ENCODE measurements at regions of chr9 and their contacts with region 1.

Region 1: GRCh38 chr9:893843-894420 is 52.4 kb downstream of the DMRT1 start:
- DNase-seq: peak; percentile 80
- H3K4me3 Mint-ChIP-seq: no peak overlapping the region
- H3K27ac Mint-ChIP-seq: no peak overlapping the region
- H3K4me1 Mint-ChIP-seq: peaks cover 10% of the 10 kb centered on the region
- H3K27me3 Mint-ChIP-seq: peaks cover 5% of the 10 kb centered on the region

Region 2: GRCh38 chr9:642014-642413 is 251.9 kb before region 1 on chr9:
- CTCF ChIA-PET with region 1: no interaction called
- POLR2A ChIA-PET with region 1: no interaction called
- intact Hi-C with region 1: no loop called
- DNase-seq: no peak
- H3K4me3 Mint-ChIP-seq: no peak overlapping the region
- H3K27ac Mint-ChIP-seq: no peak overlapping the region
- H3K4me1 Mint-ChIP-seq: peaks cover 26% of the 10 kb centered on the region
- H3K27me3 Mint-ChIP-seq: no peaks in the 10 kb centered on the region

Region 3: GRCh38 chr9:818958-819357 is 75.0 kb before region 1 on chr9:
- CTCF ChIA-PET with region 1: no interaction called
- POLR2A ChIA-PET with region 1: no interaction called
- intact Hi-C with region 1: no loop called
- DNase-seq: no peak
- H3K4me3 Mint-ChIP-seq: no peak overlapping the region
- H3K27ac Mint-ChIP-seq: no peak overlapping the region
- H3K4me1 Mint-ChIP-seq: no peaks in the 10 kb centered on the region
- H3K27me3 Mint-ChIP-seq: peaks cover 3% of the 10 kb centered on the region

Region 4: GRCh38 chr9:846852-847251 is 47.1 kb before region 1 on chr9:
- CTCF ChIA-PET with region 1: no interaction called
- POLR2A ChIA-PET with region 1: no interaction called
- intact Hi-C with region 1: loop called (anchors 5 kb)
- DNase-seq: no peak
- H3K4me3 Mint-ChIP-seq: no peak overlapping the region
- H3K27ac Mint-ChIP-seq: no peak overlapping the region
- H3K4me1 Mint-ChIP-seq: peaks cover 12% of the 10 kb centered on the region
- H3K27me3 Mint-ChIP-seq: peaks cover 41% of the 10 kb centered on the region

Region 5: GRCh38 chr9:1009101-1009707 is 115.3 kb after region 1 on chr9:
- CTCF ChIA-PET with region 1: interaction called, 69 read pairs
- POLR2A ChIA-PET with region 1: no interaction called
- intact Hi-C with region 1: loop called (anchors 1 kb)
- DNase-seq: peak; percentile 86
- H3K4me3 Mint-ChIP-seq: no peak overlapping the region
- H3K27ac Mint-ChIP-seq: no peak overlapping the region
- H3K4me1 Mint-ChIP-seq: peaks cover 3% of the 10 kb centered on the region
- H3K27me3 Mint-ChIP-seq: peaks cover 13% of the 10 kb centered on the region

Measured in activated CD4-positive, alpha-beta memory T cell treated with anti-CD3 and anti-CD28 coated beads for 36 hours (primary cell).